MCF 10A (cell line): ENCODE measurements at regions of chr7 and their contacts with region 1.

Region 1: DNA sequence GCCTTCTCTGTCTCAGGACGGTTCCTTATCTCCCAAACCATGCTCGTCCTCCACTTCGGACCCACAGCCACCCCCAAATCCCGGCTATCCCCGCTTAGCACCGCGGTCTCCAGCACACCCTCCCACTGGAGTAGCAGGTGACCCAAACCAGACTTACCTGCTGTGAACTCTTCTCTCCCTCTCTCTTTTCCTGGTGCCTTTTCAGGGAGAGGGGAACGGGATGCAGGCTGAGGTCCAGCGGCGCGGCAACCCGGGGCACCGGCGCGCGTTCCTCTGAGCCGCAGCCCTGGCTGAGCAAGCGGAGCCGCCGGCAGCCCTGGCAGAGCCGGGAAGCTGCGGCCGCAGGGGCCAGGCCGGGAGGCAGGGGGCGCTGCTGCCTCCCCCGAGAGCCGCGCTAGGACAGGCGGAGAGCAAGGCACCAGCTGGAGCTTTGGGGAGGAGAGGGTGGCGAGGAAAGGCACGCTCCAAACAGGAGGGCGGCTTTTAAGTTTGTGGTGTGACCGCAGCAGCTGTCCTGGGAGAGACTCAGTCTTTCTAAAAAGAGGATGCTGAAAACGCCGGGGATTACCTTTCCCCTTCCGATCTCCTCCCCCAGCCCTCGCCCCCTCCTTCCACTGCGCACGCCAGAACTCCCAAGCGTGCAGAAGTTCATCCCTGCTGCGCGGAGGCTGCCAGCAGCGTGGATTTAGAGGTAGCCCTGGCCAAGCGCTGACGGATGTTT is at the start of gene SEMA3D:
- DNase-seq: peak; percentile 47
- H3K4me3 Mint-ChIP-seq: peak within 1 kb of the TSS; percentile 50
- H3K27ac Mint-ChIP-seq: no peak within 1 kb of the TSS
- H3K4me1 Mint-ChIP-seq: peaks cover 10% of the 10 kb centered on the region
- H3K27me3 Mint-ChIP-seq: peaks cover 84% of the 10 kb centered on the region
- CTCF ChIP-seq: peak; percentile 59
- total RNA-seq, gene SEMA3D: not detected in 2 replicates

Region 2: DNA sequence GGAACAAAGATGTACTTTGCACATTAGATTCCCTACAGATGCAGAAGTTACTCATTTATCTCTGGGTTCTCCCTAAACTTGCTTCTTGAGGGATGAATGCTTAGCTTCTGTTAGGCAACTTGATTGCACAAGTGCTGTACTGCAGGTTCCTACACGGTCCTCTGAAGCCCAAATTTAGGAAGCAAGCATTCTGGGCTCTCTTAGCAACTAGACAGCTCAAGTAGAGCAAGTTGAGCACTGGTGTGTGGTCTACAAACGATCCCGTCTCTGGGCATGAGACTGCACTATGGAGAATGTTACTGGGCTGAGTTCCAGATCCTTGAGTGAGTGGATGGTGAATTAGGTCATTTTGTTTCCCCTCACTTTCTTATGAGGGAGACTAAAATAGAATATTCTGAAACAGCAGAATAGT is 14.1 kb before region 1 on chr7:
- CTCF ChIA-PET with region 1: no interaction called
- POLR2A ChIA-PET with region 1: no interaction called
- intact Hi-C with region 1: no loop called
- DNase-seq: no peak
- H3K4me3 Mint-ChIP-seq: no peak overlapping the region
- H3K27ac Mint-ChIP-seq: no peak overlapping the region
- H3K4me1 Mint-ChIP-seq: no peaks in the 10 kb centered on the region
- H3K27me3 Mint-ChIP-seq: peaks cover 50% of the 10 kb centered on the region
- CTCF ChIP-seq: no peak

Region 3: DNA sequence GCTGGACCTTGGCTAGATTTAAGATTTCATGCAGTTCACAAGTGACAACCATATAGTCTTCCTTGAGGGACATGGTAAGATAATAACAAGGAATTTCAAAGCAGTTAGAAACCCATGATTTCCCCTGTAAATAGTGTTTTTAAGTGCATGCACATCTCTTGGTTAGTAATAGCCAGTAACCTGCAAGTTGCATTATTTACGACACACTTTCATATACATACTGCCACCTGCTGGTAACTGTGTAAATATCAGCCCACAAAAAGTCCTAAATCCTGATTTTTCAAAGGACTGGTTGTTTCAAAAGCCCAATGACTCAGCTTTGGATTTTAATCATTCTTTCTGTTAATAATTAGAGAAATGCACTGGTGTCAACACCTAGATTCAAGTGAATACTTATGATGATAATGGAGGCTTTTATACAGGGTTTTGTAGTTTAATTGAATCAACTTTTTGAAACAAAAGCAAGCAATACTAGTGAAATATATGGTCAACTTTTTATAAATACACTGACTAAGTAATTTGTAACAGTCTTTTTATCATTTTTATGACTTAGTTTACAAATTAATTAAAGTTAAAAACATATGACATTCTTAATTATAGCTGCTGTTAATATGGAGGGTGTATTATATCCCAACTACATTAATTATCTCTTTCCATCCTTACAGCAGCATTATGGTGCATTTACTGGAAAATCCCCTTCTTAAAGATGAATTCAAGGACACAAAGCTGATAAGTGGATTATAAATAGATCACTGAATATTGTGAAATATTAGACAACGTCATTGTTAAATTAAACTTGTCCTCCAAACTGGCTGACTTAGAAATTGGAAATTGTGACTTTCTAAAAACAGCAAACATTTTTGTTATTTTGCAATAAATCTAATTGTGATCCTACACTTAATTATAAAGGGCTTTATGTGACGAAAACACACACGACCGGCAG is 367.8 kb after region 1 on chr7:
- CTCF ChIA-PET with region 1: interaction called, 3 read pairs
- POLR2A ChIA-PET with region 1: no interaction called
- intact Hi-C with region 1: loop called (anchors 2 kb)
- DNase-seq: peak; percentile 54
- H3K4me3 Mint-ChIP-seq: no peak overlapping the region
- H3K27ac Mint-ChIP-seq: no peak overlapping the region
- H3K4me1 Mint-ChIP-seq: no peaks in the 10 kb centered on the region
- H3K27me3 Mint-ChIP-seq: peaks cover 52% of the 10 kb centered on the region
- CTCF ChIP-seq: peak; percentile 78